Sciatic nerve (tissue), 2 donors: ENCODE measurements at regions of chr2 and their contacts with region 1.

Region 1: GRCh38 chr2:113167115-113167932 is 6.4 kb upstream of the PSD4 start:
- DNase-seq: no peak
- ATAC-seq: peak; percentile 80

Region 2: DNA sequence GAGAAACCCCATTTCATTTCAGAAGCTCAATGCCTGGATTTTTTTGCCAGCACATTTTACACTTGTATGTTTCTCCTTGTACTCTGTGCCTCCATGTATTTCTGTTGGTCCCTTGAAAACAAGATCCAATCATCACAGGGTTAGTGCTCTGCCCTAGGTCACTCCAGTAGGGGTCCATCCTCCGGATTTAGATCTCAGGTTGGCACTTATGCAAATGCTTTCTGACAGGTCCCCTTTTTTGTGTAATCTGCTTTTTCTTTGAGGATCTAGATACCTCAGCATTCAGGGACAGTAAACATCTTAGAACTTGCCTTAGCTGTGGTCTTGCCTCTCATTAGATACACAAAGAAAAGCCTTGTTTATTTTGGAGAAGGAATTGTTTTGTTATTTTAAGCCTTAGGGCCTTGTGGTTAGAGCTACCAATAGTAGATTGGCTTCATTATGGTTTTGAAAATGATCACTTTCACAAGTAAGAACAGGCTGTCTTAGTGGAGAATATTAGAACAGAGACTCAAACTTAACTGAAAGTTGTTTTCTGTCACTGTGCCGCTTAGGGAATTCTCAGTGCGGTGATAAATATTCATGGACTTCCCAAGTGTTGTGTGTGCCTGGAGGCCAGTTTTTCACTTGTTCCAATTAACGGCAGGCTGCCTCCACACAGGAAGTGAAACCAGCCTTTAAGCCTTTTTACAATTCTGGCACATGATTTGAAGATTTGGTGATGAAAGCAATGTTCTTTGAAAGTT is 1261.2 kb before region 1 on chr2:
- intact Hi-C with region 1: no loop called
- DNase-seq: no peak
- ATAC-seq: peak; percentile 87

Region 3: GRCh38 chr2:112301171-112301584 is 866.1 kb before region 1 on chr2:
- intact Hi-C with region 1: no loop called
- DNase-seq: no peak
- ATAC-seq: no peak

Region 4: DNA sequence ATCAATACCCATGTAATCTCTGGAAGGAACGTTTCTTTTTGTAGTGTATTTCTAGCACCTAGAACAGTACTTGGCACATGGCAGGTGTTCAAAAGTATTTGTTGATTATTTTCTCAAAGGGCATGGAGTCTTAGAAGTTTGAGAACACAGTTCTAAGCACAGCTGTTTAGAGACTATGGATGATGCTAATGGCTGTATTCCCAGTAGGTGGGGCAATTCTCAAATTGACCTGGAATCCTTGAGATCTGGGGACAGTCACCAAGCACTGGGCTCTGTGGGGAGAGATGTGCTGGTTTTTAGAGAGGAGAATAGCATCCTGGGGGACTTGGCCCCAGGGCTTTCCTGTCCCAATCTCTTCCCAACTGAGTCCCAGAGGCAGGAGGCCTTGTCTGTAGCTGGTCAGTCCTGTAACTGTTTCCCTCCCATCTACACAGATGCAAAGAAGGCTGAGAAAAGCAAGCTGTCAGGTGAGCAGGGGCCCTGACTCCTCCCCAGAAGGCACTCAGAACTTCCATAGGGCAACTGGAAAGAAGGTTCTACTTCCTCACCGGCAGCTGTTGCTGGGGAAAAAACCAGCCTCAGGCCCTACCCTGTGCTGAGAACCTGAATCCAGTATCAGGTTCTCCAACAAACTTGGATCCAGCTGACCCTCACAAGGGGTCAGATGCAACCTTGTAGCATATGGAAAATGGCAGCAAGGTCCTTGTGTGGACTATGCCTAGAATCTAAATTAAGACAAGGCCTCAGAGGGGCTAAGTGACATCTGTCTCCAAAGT is 206.9 kb before region 1 on chr2:
- intact Hi-C with region 1: no loop called
- DNase-seq: no peak
- ATAC-seq: no peak

Region 5: GRCh38 chr2:114962532-114962931 is 1795.2 kb after region 1 on chr2:
- intact Hi-C with region 1: loop called (anchors 5 kb)
- DNase-seq: no peak
- ATAC-seq: no peak